ENCODE measurements at regions of chr11 and their contacts with region 1.

Region 1: GRCh38 chr11:129815596-129816461 is at the start of gene TMEM45B:
- DNase-seq: peak; percentile 34 to 50 (median 43)
- H3K4me3 ChIP-seq: peak within 1 kb of the TSS in 1 of 2 donors; percentile 33
- H3K4me3 Mint-ChIP-seq: peak within 1 kb of the TSS; percentile 86 to 93 (median 90)
- H3K27ac ChIP-seq: no peak within 1 kb of the TSS
- H3K27ac Mint-ChIP-seq: peak within 1 kb of the TSS; percentile 84 to 97 (median 94)
- H3K4me1 ChIP-seq: peaks cover 30% of the 10 kb centered on the region
- H3K4me1 Mint-ChIP-seq: peaks cover 34 to 71% (median 58%) of the 10 kb centered on the region in 4 donors
- H3K27me3 ChIP-seq: no peaks in the 10 kb centered on the region
- H3K27me3 Mint-ChIP-seq: peaks cover 0 to 14% of the 10 kb centered on the region in 2 donors
- total RNA-seq, gene TMEM45B: 30.8 to 34.4 TPM

Region 2: DNA sequence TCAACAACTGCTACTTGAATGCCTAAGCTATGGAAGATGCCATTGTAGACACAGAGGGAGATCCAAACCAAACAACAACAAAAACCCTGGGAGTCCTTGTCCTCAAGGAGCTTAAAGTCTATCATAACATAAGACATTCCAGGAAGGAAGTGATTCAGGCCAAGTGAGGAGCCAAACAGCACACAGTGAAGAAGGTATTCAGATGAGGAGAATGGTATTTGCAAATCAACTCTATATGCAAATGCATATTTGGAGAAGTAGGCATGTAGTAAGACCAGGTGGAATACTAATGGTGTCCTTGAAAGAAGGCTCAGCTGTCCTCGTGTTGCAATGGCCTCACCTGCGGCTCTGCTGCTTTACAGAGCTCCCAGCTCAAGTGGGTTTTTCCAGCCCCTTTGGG is 413.1 kb before region 1 on chr11:
- CTCF ChIA-PET with region 1: no interaction called
- POLR2A ChIA-PET with region 1: no interaction called
- intact Hi-C with region 1: no loop called
- DNase-seq: no peak
- H3K4me3 ChIP-seq: no peak overlapping the region
- H3K4me3 Mint-ChIP-seq: no peak overlapping the region
- H3K27ac ChIP-seq: no peak overlapping the region
- H3K27ac Mint-ChIP-seq: no peak overlapping the region
- H3K4me1 ChIP-seq: no peaks in the 10 kb centered on the region
- H3K4me1 Mint-ChIP-seq: no peaks in the 10 kb centered on the region
- H3K27me3 ChIP-seq: no peaks in the 10 kb centered on the region
- H3K27me3 Mint-ChIP-seq: peaks cover 2 to 5% of the 10 kb centered on the region in 2 donors

Region 3: DNA sequence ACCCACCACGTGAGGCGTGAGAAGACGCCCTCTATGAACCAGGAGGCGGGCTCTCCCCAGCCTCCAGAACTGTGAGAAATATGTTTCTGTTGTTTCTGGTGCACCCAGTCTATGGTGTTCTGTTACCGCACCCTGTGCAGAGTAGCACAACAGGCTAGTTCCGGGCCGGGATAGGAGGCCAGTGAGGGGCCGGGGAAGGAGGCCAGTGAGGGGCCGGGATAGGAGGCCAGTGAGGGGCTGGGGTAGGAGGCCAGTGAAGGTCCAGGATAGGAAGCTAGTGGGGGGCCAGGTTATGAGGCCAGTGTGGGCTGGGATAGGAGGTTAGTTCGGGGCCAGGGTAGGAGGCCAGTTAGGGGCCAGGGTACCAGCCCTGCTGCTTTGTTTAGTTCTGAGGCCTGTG is 235.6 kb before region 1 on chr11:
- CTCF ChIA-PET with region 1: no interaction called
- POLR2A ChIA-PET with region 1: no interaction called
- intact Hi-C with region 1: no loop called
- DNase-seq: no peak
- H3K4me3 ChIP-seq: no peak overlapping the region
- H3K4me3 Mint-ChIP-seq: no peak overlapping the region
- H3K27ac ChIP-seq: no peak overlapping the region
- H3K27ac Mint-ChIP-seq: no peak overlapping the region
- H3K4me1 ChIP-seq: no peaks in the 10 kb centered on the region
- H3K4me1 Mint-ChIP-seq: no peaks in the 10 kb centered on the region
- H3K27me3 ChIP-seq: no peaks in the 10 kb centered on the region
- H3K27me3 Mint-ChIP-seq: peaks cover 5 to 15% of the 10 kb centered on the region in 2 donors

Region 4: DNA sequence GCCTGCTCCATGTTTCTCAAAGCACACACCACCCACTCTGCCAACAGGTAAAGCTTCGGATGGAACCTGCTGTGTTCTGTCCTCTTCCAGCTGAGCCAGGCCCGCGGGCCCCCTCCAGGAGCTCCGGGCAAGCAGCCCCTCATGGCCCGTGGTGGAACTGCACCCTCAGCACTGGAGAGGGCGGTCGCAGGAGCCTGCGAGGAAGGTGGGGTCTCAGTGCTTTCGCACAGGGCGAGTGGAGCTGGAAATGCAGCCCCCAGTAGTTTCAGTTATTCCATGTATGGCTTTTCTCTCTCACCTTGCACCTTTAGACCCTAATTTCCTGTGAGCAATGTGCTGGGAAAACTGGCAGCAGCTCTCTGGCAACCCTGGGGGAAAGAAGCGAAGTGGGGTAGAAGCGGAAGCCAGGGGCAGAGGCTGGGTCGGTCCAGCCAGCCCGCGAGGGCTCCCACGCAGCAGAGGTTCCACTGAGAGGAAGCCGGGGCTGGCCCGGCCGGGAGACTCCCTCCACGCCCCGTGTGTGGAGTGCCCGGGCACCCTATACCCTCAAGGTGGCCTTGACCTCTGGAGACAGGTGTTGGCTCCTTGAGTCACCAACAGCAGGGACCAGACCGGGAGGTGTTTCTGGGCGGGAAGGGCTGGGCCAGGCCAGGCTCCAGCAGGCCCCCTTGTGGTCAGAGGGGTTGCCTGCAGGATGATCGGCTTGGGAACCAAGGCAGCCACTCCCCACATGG is 120.1 kb before region 1 on chr11:
- CTCF ChIA-PET with region 1: no interaction called
- POLR2A ChIA-PET with region 1: no interaction called
- intact Hi-C with region 1: no loop called
- DNase-seq: peak; percentile 48 to 60 (median 59)
- H3K4me3 ChIP-seq: peak overlapping the region; percentile 46 to 69
- H3K4me3 Mint-ChIP-seq: peak overlapping the region; percentile 76 to 90 (median 84)
- H3K27ac ChIP-seq: no peak overlapping the region
- H3K27ac Mint-ChIP-seq: peak overlapping the region in 4 of 7 donors; percentile 39 to 66 (median 50)
- H3K4me1 ChIP-seq: peaks cover 6% of the 10 kb centered on the region
- H3K4me1 Mint-ChIP-seq: peaks cover 7 to 19% (median 9%) of the 10 kb centered on the region in 4 donors
- H3K27me3 ChIP-seq: no peaks in the 10 kb centered on the region
- H3K27me3 Mint-ChIP-seq: no peaks in the 10 kb centered on the region

Region 5: DNA sequence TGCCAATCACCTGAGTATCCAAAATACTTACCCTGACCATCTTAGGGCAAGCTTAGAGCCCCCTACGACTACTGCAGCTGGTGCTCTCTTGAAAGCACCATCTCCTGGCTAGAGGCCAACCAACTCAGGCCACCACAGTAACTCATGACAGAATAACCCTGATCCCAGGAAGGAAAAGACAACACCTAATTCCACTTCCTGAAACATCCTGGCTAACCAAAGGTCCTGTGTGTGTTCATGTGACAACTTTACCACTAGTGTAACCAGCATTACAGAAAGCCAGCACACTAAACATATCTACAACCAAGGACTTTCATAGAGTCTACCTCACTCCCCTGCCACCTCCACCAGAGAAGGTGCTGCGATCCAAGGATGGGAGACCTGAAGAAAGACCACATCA is 17.6 kb before region 1 on chr11:
- CTCF ChIA-PET with region 1: interaction called, 10 read pairs
- POLR2A ChIA-PET with region 1: interaction called, 56 read pairs
- intact Hi-C with region 1: no loop called
- DNase-seq: no peak
- H3K4me3 ChIP-seq: no peak overlapping the region
- H3K4me3 Mint-ChIP-seq: peak overlapping the region in 3 of 8 donors; percentile 11 to 43 (median 42)
- H3K27ac ChIP-seq: no peak overlapping the region
- H3K27ac Mint-ChIP-seq: peak overlapping the region in 1 of 7 donors; percentile 5
- H3K4me1 ChIP-seq: peaks cover 16% of the 10 kb centered on the region
- H3K4me1 Mint-ChIP-seq: peaks cover 13 to 42% (median 20%) of the 10 kb centered on the region in 4 donors
- H3K27me3 ChIP-seq: no peaks in the 10 kb centered on the region
- H3K27me3 Mint-ChIP-seq: no peaks in the 10 kb centered on the region

Region 6: DNA sequence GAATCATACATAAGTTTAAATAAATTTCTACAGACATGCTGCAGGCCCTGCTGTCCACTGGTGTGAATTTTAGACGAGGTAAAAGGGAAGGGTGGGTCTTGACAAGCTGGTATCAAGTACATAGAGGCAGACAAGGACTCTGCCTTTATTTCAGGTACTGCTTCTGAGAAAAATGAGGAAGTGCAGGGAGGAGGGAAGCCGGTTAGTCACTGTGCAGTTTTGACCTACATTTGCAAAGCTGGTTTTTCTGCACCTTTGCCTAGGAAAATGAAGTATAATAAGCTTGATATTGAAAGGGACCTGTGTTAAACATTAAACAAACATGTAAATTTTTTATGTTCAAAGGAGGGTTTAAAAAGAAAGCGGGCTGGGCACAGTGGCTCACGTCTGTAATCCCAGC is 24.4 kb after region 1 on chr11:
- CTCF ChIA-PET with region 1: interaction called, 4 read pairs
- POLR2A ChIA-PET with region 1: interaction called, 10 read pairs
- intact Hi-C with region 1: no loop called
- DNase-seq: no peak
- H3K4me3 ChIP-seq: no peak overlapping the region
- H3K4me3 Mint-ChIP-seq: peak overlapping the region in 6 of 8 donors; percentile 33 to 78 (median 60)
- H3K27ac ChIP-seq: no peak overlapping the region
- H3K27ac Mint-ChIP-seq: peak overlapping the region in 6 of 7 donors; percentile 11 to 89 (median 55)
- H3K4me1 ChIP-seq: peaks cover 45% of the 10 kb centered on the region
- H3K4me1 Mint-ChIP-seq: peaks cover 27 to 65% (median 38%) of the 10 kb centered on the region in 4 donors
- H3K27me3 ChIP-seq: no peaks in the 10 kb centered on the region
- H3K27me3 Mint-ChIP-seq: no peaks in the 10 kb centered on the region

Region 7: DNA sequence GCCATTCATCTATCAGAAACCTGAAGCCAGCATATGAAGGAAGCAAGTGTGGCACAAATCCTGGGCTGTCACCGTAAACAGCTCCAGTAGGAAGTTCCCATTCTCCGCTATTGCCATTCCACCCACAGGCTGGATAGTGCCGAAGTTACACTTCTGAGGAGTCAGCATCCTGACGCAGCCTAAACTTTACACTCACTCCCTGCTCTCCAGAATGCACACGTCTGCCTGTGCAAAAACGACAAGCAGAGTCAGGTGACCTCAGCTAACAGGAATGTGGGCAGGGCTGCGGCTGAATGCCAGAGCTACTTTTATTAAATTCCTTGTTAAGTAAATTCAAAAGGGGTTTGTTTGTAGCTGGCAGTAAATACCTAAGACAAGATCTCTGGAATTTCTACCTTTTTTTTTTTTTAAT is 45.9 kb after region 1 on chr11:
- CTCF ChIA-PET with region 1: interaction called, 7 read pairs
- POLR2A ChIA-PET with region 1: interaction called, 46 read pairs
- intact Hi-C with region 1: no loop called
- DNase-seq: no peak
- H3K4me3 ChIP-seq: no peak overlapping the region
- H3K4me3 Mint-ChIP-seq: peak overlapping the region in 4 of 8 donors; percentile 16 to 72 (median 32)
- H3K27ac ChIP-seq: no peak overlapping the region
- H3K27ac Mint-ChIP-seq: peak overlapping the region; percentile 83 to 96 (median 93)
- H3K4me1 ChIP-seq: peaks cover 59% of the 10 kb centered on the region
- H3K4me1 Mint-ChIP-seq: peaks cover 28 to 55% (median 43%) of the 10 kb centered on the region in 4 donors
- H3K27me3 ChIP-seq: no peaks in the 10 kb centered on the region
- H3K27me3 Mint-ChIP-seq: no peaks in the 10 kb centered on the region

Region 8: DNA sequence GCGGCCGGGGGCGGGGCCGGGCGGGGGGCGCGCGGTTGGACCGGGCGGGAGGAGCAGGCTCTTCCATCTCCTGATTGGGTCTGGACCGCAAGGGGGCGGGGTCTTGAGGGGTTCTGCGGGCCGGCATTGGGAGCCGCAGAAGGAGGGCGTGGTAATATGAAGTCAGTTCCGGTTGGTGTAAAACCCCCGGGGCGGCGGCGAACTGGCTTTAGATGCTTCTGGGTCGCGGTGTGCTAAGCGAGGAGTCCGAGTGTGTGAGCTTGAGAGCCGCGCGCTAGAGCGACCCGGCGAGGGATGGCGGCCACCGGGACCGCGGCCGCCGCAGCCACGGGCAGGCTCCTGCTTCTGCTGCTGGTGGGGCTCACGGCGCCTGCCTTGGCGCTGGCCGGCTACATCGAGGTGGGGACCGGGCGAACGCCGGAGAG is 253.9 kb after region 1 on chr11 and contains the start of gene APLP2:
- CTCF ChIA-PET with region 1: no interaction called
- POLR2A ChIA-PET with region 1: interaction called, 4 read pairs
- intact Hi-C with region 1: loop called (anchors 1 kb)
- DNase-seq: peak; percentile 96 to 99 (median 96)
- H3K4me3 ChIP-seq: peak within 1 kb of the TSS; percentile 65 to 89
- H3K4me3 Mint-ChIP-seq: peak within 1 kb of the TSS; percentile 93 to 99 (median 98)
- H3K27ac ChIP-seq: peak within 1 kb of the TSS; percentile 74
- H3K27ac Mint-ChIP-seq: peak within 1 kb of the TSS; percentile 94 to 98 (median 97)
- H3K4me1 ChIP-seq: peaks cover 17% of the 10 kb centered on the region
- H3K4me1 Mint-ChIP-seq: peaks cover 16 to 33% (median 20%) of the 10 kb centered on the region in 4 donors
- H3K27me3 ChIP-seq: no peaks in the 10 kb centered on the region
- H3K27me3 Mint-ChIP-seq: no peaks in the 10 kb centered on the region
- total RNA-seq, gene APLP2: 58.7 to 65.3 TPM